ENCODE measurements at regions of chr9 and their contacts with region 1.

Region 1: DNA sequence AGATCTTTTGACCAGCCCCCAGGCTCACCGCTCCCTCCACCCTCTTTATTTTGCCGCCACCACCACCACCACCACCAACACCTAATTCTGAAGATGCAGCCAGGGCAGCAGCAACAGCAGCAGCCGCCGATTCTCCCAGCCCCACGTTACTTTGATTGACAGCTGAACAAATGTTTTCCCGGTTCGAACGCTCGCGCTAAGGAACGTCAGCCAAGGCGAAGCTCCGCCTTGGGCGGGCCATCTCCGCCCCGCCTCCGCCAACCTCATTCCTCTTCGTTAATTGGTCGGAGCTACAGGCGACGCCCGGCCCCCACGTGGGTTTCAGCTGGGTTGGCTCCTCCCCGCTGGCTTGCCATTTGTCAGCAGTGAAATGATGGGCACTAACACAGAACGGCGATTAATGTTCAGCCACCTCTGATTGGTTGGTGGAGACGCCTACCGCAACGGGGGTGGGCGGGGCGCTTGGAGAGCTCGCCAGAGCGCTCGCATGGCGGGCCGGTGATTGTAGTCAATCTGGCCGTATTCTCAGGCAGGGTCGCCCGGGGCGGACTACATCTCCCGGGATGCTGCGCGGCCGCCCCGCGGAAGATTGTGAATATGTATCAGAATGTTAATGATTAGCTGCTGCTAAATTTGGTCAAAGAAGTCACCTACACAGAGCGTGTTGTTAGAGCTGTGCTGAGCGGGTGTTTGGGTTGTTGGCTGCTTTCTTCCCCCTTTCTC is at the start of gene TLE4:
- DNase-seq: peak; percentile 99
- H3K4me3 Mint-ChIP-seq: peak within 1 kb of the TSS; percentile 65
- H3K27ac Mint-ChIP-seq: no peak within 1 kb of the TSS
- H3K4me1 Mint-ChIP-seq: peaks cover 26% of the 10 kb centered on the region
- H3K27me3 Mint-ChIP-seq: peaks cover 7% of the 10 kb centered on the region
- total RNA-seq, gene TLE4: 20.7 and 21.7 TPM in 2 replicates

Region 2: DNA sequence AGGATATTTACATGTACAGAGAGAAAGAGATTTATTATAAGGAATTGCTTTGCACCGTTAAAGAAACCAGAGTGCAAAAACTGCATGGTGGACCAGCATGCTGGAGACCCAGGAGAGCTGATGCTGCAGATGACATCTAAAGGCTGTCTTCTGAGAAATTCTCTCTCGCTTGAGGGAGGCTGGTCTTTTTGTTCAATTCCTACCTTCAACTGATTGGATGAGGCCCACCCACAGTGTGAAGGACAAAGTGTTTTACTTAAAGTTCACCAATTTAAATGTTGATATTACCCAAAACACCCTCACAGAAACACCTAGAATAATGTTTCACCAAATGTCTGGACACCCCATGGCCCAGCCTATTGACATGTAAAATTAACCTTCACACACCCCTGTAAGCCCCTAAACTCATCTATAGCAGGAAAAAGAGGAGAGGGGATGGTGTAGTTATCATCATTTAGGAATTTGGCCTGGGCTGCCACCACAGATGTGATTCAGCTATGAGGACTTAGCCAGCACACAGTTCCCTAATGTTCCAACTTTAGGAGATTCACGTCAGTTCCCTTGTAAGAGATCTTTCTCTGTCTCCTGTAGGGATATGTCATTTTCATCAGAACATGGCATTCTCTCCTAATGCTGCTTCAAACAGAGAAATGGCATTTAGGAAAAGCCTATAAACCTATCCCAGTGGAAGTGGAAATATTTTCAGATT is 357.9 kb before region 1 on chr9:
- intact Hi-C with region 1: no loop called
- DNase-seq: no peak
- H3K4me3 Mint-ChIP-seq: no peak overlapping the region
- H3K27ac Mint-ChIP-seq: no peak overlapping the region
- H3K4me1 Mint-ChIP-seq: no peaks in the 10 kb centered on the region
- H3K27me3 Mint-ChIP-seq: no peaks in the 10 kb centered on the region

Region 3: DNA sequence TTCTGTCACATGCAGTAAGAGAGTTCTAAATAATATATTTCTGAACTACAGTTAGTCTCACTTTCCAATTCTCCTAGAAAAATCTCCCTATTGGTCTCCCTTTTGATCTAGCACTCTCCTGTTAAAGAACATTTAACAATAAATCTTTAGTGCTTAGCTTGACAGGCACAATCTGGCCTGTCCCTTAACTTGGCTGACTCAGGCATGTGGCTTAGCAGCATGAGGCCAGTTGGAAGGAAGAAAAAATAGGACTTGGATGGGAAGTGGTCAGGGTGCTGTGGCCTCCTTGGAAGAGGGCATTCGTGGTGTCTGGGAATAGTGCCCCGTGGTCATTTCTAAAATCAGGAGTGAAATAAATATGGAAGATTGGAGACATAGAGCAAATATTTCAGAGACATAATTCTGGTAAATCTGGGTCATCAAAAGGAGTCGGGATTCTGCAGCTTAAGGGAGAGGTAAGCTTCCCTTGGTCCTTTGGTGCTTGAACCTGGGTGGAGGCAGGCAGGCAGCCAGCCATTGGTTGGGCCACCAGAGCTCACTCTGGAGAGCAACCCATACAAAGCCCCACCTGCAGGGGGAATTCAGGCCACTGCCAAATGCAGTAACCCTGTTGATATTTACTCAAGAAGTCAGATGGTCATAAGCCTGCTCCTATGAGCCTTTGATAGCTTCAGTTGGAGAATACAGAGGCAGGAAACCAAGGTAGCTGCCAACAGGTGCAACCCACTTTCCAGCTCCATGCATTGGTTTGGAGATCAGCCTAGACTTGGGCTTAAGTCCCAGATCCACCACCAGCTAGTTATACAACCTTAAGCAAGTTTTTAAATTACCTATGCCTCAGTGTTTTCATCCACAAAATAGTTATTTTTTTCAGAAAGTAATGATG is 28.5 kb before region 1 on chr9:
- intact Hi-C with region 1: no loop called
- DNase-seq: no peak
- H3K4me3 Mint-ChIP-seq: no peak overlapping the region
- H3K27ac Mint-ChIP-seq: no peak overlapping the region
- H3K4me1 Mint-ChIP-seq: peaks cover 8% of the 10 kb centered on the region
- H3K27me3 Mint-ChIP-seq: peaks cover 12% of the 10 kb centered on the region

Region 4: DNA sequence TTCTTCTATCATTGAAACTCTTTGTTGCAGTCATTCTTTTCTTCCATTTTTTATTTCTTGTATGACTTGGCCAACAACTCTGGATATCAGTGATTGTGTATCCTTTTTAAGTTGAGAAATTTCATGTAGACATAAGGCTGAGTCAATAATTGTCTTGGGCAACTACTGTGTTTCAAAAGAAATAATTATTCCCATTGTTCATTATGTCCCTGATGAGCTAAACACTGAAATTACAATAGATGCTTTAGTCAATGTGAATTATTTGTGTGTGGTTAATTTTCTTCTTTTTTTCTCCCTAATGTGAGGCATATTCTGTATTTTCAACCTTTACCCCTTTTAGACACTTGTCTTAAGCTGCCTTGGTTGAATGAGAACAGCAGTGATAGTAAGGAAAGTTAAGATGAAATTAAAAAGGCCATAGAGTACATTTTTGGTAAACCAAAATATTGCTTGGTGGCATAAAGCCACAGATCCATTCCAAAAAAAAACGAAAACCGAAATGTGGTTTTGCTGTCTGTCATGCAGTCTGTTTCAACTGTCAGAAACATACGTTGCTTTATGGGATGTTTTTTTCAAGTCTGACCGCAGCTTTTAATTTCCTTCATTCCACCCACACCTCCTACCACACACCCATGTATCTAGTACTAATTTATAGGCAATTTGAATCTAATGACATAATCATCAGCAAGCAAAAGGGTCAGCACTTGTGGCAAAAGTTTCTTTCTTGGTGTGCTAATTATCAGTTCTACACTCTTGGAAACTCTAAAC is 21.4 kb after region 1 on chr9:
- intact Hi-C with region 1: loop called (anchors 2 kb)
- DNase-seq: no peak
- H3K4me3 Mint-ChIP-seq: no peak overlapping the region
- H3K27ac Mint-ChIP-seq: peak overlapping the region; percentile 30
- H3K4me1 Mint-ChIP-seq: peaks cover 62% of the 10 kb centered on the region
- H3K27me3 Mint-ChIP-seq: peaks cover 11% of the 10 kb centered on the region

Region 5: GRCh38 chr9:79694676-79695400 is 123.4 kb after region 1 on chr9:
- intact Hi-C with region 1: loop called (anchors 5 kb)
- DNase-seq: no peak
- H3K4me3 Mint-ChIP-seq: no peak overlapping the region
- H3K27ac Mint-ChIP-seq: no peak overlapping the region
- H3K4me1 Mint-ChIP-seq: peaks cover 31% of the 10 kb centered on the region
- H3K27me3 Mint-ChIP-seq: no peaks in the 10 kb centered on the region

Region 6: DNA sequence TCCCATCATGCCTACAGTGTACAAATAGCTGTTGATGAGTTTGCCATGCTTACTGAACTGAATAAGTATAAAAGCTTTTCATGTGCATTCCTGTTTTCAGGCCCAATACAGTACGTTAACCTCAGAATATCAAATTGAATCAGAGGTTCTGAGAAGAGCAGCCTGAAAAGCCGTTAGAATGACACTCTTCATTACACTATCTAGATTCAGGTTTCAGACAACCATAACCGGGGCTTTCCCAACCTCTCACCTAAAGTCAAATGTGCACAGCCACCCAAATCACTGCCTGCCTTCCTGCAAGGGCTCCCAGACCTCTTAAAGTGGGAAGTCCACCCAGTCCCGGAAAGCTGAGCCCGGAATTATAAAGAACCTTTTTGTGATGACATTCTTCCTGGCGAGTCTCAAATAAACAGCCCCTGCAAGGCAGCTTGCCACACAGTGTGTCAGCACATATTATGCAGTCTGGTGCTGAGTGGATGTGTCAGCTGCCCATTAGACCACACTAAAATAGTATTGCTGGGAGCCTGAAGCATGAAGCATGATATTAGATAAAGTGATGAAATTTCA is 246.1 kb after region 1 on chr9:
- intact Hi-C with region 1: loop called (anchors 1 kb)
- DNase-seq: peak; percentile 22
- H3K4me3 Mint-ChIP-seq: no peak overlapping the region
- H3K27ac Mint-ChIP-seq: no peak overlapping the region
- H3K4me1 Mint-ChIP-seq: peaks cover 43% of the 10 kb centered on the region
- H3K27me3 Mint-ChIP-seq: no peaks in the 10 kb centered on the region

Measured in activated T-helper 2 cell treated with anti-CD3 and anti-CD28 coated beads, Interferon-gamma antibody, Interleukin-2, Interleukin-4, amounts not matched to agents 10 μg/mL and 5 μg/mL and 100 μg/mL, durations not matched to agents 14 hours and 24 hours and 36 hours (primary cell).